CD8-positive, alpha-beta T cell (primary cell): ENCODE measurements at regions of chr1 and their contacts with region 1.

Region 1: DNA sequence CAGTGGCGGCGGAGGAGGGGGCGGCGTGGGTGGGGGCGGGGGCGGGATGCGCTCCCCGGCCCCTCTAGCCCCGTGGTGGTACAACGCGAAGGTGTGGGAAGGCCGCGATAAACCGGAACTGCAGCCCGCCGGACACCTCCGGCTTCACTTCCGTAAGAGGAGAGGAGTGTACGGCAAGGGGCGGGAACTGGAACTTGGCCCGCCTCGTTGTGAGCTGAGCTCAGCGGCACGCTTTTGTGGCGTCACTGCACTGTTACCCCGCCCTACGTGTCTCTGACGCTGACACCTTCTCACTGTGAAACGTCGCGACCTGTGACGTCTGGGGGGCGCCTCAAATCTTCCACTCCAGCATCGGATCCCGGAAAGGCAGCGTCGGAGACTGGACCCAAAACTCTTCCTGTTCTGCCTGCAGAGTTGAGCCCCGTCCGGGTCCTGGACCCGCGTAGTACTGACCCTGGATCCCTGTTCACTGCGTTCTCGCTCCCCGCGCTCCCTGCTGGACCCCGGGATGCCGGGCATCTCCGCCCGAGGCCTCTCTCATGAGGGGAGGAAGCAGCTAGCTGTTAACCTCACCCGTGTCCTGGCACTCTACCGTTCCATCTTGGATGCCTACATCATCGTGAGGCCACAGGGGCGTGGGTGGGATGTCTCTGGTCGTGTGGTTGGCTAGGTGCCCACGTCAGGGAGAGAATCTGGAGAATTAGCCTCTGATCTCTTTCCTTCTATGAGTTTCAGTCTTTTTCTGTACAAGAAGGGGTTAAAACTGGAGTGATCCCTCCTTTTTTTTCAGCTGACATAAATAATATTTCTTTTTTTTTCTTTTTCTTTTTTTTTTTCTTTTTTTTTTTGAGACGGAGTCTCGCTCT is at the start of gene ISG20L2:
- DNase-seq: peak; percentile 83 to 100 (median 91)
- ATAC-seq: peak; percentile 93
- H3K4me3 ChIP-seq: peak within 1 kb of the TSS; percentile 80 to 96
- H3K4me3 Mint-ChIP-seq: no peak within 1 kb of the TSS
- H3K27ac ChIP-seq: peak within 1 kb of the TSS; percentile 88 to 99
- H3K27ac Mint-ChIP-seq: peak within 1 kb of the TSS; percentile 95
- H3K4me1 ChIP-seq: peaks cover 41% of the 10 kb centered on the region
- H3K4me1 Mint-ChIP-seq: peaks cover 24% of the 10 kb centered on the region
- H3K27me3 ChIP-seq: no peaks in the 10 kb centered on the region
- H3K27me3 Mint-ChIP-seq: no peaks in the 10 kb centered on the region
- CTCF ChIP-seq: no peak
- total RNA-seq, gene ISG20L2: 54.5 to 63.5 TPM

Region 2: DNA sequence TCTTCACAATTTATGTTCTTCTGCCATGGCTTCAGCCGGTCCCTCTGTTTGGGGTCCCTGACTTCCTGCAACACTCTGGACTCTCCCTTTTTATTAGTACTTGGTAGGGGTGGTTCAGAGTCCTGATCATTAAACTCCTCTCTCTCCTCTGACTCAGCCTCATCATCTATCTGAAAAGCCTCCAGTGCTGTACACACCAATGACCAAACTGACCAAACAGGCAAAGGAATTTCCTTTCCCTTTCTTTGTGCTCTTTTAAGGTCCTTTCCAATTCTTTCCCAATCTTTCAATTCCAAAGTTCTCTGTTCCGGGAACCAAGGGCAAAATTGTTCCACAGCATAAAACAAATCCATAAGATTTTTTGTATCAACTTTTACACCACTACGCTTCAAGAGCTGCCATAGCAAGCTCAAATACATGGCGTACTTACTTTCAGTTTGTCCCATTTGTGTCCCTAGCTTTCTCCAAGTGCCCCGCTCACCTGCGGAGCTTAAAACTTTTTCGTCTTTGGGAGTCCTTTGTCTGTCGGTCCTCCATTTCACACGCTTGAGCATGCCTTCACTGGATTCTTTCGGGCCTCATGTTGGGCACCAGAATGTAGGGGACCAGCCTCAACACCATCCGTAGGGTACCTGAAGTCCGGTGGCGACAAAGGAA is 1030.3 kb before region 1 on chr1:
- CTCF ChIA-PET with region 1: no interaction called
- POLR2A ChIA-PET with region 1: no interaction called
- intact Hi-C with region 1: no loop called
- DNase-seq: no peak
- ATAC-seq: no peak
- H3K4me3 ChIP-seq: no peak overlapping the region
- H3K4me3 Mint-ChIP-seq: no peak overlapping the region
- H3K27ac ChIP-seq: no peak overlapping the region
- H3K27ac Mint-ChIP-seq: no peak overlapping the region
- H3K4me1 ChIP-seq: peaks cover 4% of the 10 kb centered on the region
- H3K4me1 Mint-ChIP-seq: peaks cover 57% of the 10 kb centered on the region
- H3K27me3 ChIP-seq: no peaks in the 10 kb centered on the region
- H3K27me3 Mint-ChIP-seq: no peaks in the 10 kb centered on the region
- CTCF ChIP-seq: no peak

Region 3: GRCh38 chr1:156421062-156421938 is 307.5 kb before region 1 on chr1:
- CTCF ChIA-PET with region 1: no interaction called
- POLR2A ChIA-PET with region 1: no interaction called
- intact Hi-C with region 1: no loop called
- DNase-seq: peak; percentile 31 to 87 (median 68)
- ATAC-seq: peak; percentile 64
- H3K4me3 ChIP-seq: peak overlapping the region; percentile 66 to 71
- H3K4me3 Mint-ChIP-seq: peak overlapping the region; percentile 93
- H3K27ac ChIP-seq: no peak overlapping the region
- H3K27ac Mint-ChIP-seq: no peak overlapping the region
- H3K4me1 ChIP-seq: peaks cover 27% of the 10 kb centered on the region
- H3K4me1 Mint-ChIP-seq: peaks cover 24% of the 10 kb centered on the region
- H3K27me3 ChIP-seq: peaks cover 28 to 29% of the 10 kb centered on the region in 2 experiments
- H3K27me3 Mint-ChIP-seq: peaks cover 68% of the 10 kb centered on the region
- CTCF ChIP-seq: no peak

Region 4: DNA sequence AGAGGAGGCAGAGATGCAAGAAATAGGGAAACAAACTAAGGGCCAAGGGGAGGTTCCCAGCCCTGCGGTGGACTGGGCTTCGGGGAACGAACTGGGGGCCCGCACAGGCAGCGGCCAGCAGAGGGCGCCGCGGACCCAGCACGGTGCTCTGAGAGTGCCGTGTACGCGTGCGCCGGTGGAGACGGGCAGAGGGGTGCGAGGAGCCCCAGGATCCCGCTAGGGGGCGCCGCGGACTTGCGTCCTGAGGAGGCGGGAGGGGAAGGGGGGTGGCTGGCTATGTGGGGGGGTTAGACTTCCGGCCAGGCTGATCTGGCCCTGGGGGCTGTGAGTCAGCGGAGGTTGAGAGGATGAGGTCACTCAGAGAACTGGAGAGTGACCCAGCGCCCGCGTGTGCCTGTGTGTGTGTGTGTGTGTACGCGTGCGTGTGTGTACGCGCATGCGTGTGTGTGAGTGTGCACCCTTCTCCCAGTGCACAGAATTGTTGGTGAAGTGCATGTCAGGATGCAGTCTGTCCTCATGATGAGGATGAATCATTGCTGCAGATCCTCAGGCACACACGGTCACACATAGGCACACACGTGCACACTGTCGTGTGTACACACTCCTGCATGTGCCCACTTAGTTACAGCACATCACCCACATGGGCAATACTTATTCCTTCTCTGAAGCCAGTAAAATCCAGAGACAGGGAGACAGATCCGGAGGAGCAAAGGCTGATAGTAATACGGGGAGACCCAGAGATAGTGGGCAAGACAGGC is 68.7 kb before region 1 on chr1:
- CTCF ChIA-PET with region 1: interaction called, 15 read pairs
- POLR2A ChIA-PET with region 1: no interaction called
- intact Hi-C with region 1: loop called (anchors 1 kb)
- DNase-seq: peak; percentile 74 to 94 (median 92)
- ATAC-seq: peak; percentile 91
- H3K4me3 ChIP-seq: no peak overlapping the region
- H3K4me3 Mint-ChIP-seq: peak overlapping the region; percentile 45
- H3K27ac ChIP-seq: peak overlapping the region in 1 of 2 experiments; percentile 47
- H3K27ac Mint-ChIP-seq: no peak overlapping the region
- H3K4me1 ChIP-seq: peaks cover 44% of the 10 kb centered on the region
- H3K4me1 Mint-ChIP-seq: peaks cover 44% of the 10 kb centered on the region
- H3K27me3 ChIP-seq: peaks cover 12 to 14% of the 10 kb centered on the region in 2 experiments
- H3K27me3 Mint-ChIP-seq: peaks cover 20% of the 10 kb centered on the region
- CTCF ChIP-seq: peak; percentile 95

Region 5: GRCh38 chr1:156705918-156706656 is 22.7 kb before region 1 on chr1:
- CTCF ChIA-PET with region 1: interaction called, 144 read pairs
- POLR2A ChIA-PET with region 1: interaction called, 28 read pairs
- intact Hi-C with region 1: loop called (anchors 1 kb)
- DNase-seq: peak; percentile 36 to 81 (median 68)
- ATAC-seq: peak; percentile 66
- H3K4me3 ChIP-seq: peak overlapping the region; percentile 52 to 89
- H3K4me3 Mint-ChIP-seq: peak overlapping the region; percentile 89
- H3K27ac ChIP-seq: peak overlapping the region; percentile 43 to 47
- H3K27ac Mint-ChIP-seq: peak overlapping the region; percentile 73
- H3K4me1 ChIP-seq: peaks cover 35% of the 10 kb centered on the region
- H3K4me1 Mint-ChIP-seq: peaks cover 32% of the 10 kb centered on the region
- H3K27me3 ChIP-seq: peaks cover 8 to 24% of the 10 kb centered on the region in 2 experiments
- H3K27me3 Mint-ChIP-seq: peaks cover 9% of the 10 kb centered on the region
- CTCF ChIP-seq: peak; percentile 82

Region 6: GRCh38 chr1:156751758-156752757 is 23.2 kb after region 1 on chr1:
- CTCF ChIA-PET with region 1: interaction called, 11 read pairs
- POLR2A ChIA-PET with region 1: interaction called, 13 read pairs
- intact Hi-C with region 1: loop called (anchors 1 kb)
- DNase-seq: peak; percentile 94 to 98 (median 97)
- ATAC-seq: peak; percentile 85
- H3K4me3 ChIP-seq: peak overlapping the region; percentile 89 to 92
- H3K4me3 Mint-ChIP-seq: peak overlapping the region; percentile 89
- H3K27ac ChIP-seq: peak overlapping the region; percentile 65 to 89
- H3K27ac Mint-ChIP-seq: peak overlapping the region; percentile 90
- H3K4me1 ChIP-seq: peaks cover 48% of the 10 kb centered on the region
- H3K4me1 Mint-ChIP-seq: peaks cover 57% of the 10 kb centered on the region
- H3K27me3 ChIP-seq: no peaks in the 10 kb centered on the region
- H3K27me3 Mint-ChIP-seq: no peaks in the 10 kb centered on the region
- CTCF ChIP-seq: no peak

Region 7: DNA sequence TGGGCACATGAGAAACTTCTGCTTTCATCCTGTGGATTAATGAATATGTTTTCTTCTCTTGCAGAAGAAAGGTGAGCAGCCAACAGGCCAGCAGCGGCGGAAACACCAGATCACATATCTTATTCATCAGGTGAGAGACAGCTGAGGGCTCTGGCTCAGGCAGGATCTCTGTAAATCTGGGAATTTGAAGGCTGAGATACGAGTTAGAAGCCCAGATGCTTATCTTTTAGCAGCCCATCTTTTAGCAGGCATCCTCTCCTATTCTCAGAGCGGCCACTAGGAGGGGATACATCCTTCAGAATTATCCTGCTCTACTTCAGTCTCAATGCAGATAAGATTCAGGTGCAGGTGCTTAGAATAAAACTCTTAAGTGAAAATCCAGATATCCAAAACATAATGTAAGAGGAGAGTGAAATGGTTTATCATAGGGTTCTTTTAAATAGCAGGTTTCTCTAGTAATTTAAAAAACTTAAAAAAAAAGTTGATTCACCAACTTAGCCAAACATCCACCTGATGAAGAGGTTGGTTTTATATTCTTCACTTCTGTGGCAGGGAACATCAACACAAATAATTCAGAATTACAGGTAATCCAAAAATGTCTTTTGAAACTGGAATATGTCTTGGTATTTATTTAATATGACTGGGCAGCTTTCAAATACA is 68.5 kb after region 1 on chr1:
- CTCF ChIA-PET with region 1: interaction called, 16 read pairs
- POLR2A ChIA-PET with region 1: interaction called, 3 read pairs
- intact Hi-C with region 1: no loop called
- DNase-seq: peak in 7 of 9 experiments; percentile 48 to 84 (median 68)
- ATAC-seq: peak; percentile 91
- H3K4me3 ChIP-seq: no peak overlapping the region
- H3K4me3 Mint-ChIP-seq: no peak overlapping the region
- H3K27ac ChIP-seq: no peak overlapping the region
- H3K27ac Mint-ChIP-seq: no peak overlapping the region
- H3K4me1 ChIP-seq: no peaks in the 10 kb centered on the region
- H3K4me1 Mint-ChIP-seq: peaks cover 8% of the 10 kb centered on the region
- H3K27me3 ChIP-seq: no peaks in the 10 kb centered on the region
- H3K27me3 Mint-ChIP-seq: no peaks in the 10 kb centered on the region
- CTCF ChIP-seq: peak; percentile 87

Region 8: DNA sequence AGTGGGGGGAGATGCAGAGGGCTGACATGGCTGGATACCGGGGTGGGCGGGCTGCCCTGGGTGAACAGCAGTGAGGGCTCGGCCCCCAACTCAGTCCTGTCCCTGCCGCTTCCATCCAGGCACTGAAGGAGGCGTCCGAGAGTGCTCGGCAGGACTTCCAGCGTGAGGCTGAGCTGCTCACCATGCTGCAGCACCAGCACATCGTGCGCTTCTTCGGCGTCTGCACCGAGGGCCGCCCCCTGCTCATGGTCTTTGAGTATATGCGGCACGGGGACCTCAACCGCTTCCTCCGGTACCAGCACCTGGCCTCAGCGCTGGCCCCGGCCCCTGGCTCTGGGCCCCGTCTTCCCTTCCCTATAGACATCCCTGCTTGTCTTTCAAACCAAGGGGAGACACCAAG is 147.5 kb after region 1 on chr1:
- CTCF ChIA-PET with region 1: no interaction called
- POLR2A ChIA-PET with region 1: no interaction called
- intact Hi-C with region 1: no loop called
- DNase-seq: no peak
- ATAC-seq: no peak
- H3K4me3 ChIP-seq: no peak overlapping the region
- H3K4me3 Mint-ChIP-seq: no peak overlapping the region
- H3K27ac ChIP-seq: no peak overlapping the region
- H3K27ac Mint-ChIP-seq: no peak overlapping the region
- H3K4me1 ChIP-seq: no peaks in the 10 kb centered on the region
- H3K4me1 Mint-ChIP-seq: no peaks in the 10 kb centered on the region
- H3K27me3 ChIP-seq: no peaks in the 10 kb centered on the region
- H3K27me3 Mint-ChIP-seq: peaks cover 18% of the 10 kb centered on the region
- CTCF ChIP-seq: no peak

Region 9: GRCh38 chr1:156892190-156893047 is 163.6 kb after region 1 on chr1:
- CTCF ChIA-PET with region 1: interaction called, 21 read pairs
- POLR2A ChIA-PET with region 1: no interaction called
- intact Hi-C with region 1: loop called in 1 of 2 experiments (anchors 1 kb)
- DNase-seq: peak; percentile 65 to 91 (median 86)
- ATAC-seq: peak; percentile 97
- H3K4me3 ChIP-seq: peak overlapping the region; percentile 33 to 36
- H3K4me3 Mint-ChIP-seq: peak overlapping the region; percentile 66
- H3K27ac ChIP-seq: no peak overlapping the region
- H3K27ac Mint-ChIP-seq: no peak overlapping the region
- H3K4me1 ChIP-seq: peaks cover 14% of the 10 kb centered on the region
- H3K4me1 Mint-ChIP-seq: peaks cover 13% of the 10 kb centered on the region
- H3K27me3 ChIP-seq: peaks cover 0 to 25% of the 10 kb centered on the region in 2 experiments
- H3K27me3 Mint-ChIP-seq: peaks cover 53% of the 10 kb centered on the region
- CTCF ChIP-seq: peak; percentile 61

Region 10: GRCh38 chr1:157019457-157019856 is 290.6 kb after region 1 on chr1:
- CTCF ChIA-PET with region 1: no interaction called
- POLR2A ChIA-PET with region 1: no interaction called
- intact Hi-C with region 1: no loop called
- DNase-seq: no peak
- ATAC-seq: no peak
- H3K4me3 ChIP-seq: no peak overlapping the region
- H3K4me3 Mint-ChIP-seq: no peak overlapping the region
- H3K27ac ChIP-seq: no peak overlapping the region
- H3K27ac Mint-ChIP-seq: no peak overlapping the region
- H3K4me1 ChIP-seq: no peaks in the 10 kb centered on the region
- H3K4me1 Mint-ChIP-seq: no peaks in the 10 kb centered on the region
- H3K27me3 ChIP-seq: peaks cover 0 to 4% of the 10 kb centered on the region in 2 experiments
- H3K27me3 Mint-ChIP-seq: peaks cover 46% of the 10 kb centered on the region
- CTCF ChIP-seq: no peak